B cell (primary cell): ENCODE measurements at regions of chr19 and their contacts with region 1.

Region 1: GRCh38 chr19:18460900-18461299 is 23.0 kb upstream of the ISYNA1 start:
- DNase-seq: no peak
- ATAC-seq: no peak
- H3K4me3 ChIP-seq: no peak overlapping the region
- H3K4me3 Mint-ChIP-seq: no peak overlapping the region
- H3K27ac ChIP-seq: no peak overlapping the region
- H3K27ac Mint-ChIP-seq: no peak overlapping the region
- H3K4me1 ChIP-seq: no peaks in the 10 kb centered on the region
- H3K4me1 Mint-ChIP-seq: peaks cover 2% of the 10 kb centered on the region
- H3K27me3 ChIP-seq: no peaks in the 10 kb centered on the region
- H3K27me3 Mint-ChIP-seq: no peaks in the 10 kb centered on the region
- CTCF ChIP-seq: no peak

Region 2: GRCh38 chr19:18436671-18437490 is 24.0 kb before region 1 on chr19:
- CTCF ChIA-PET with region 1: interaction called, 11 read pairs
- POLR2A ChIA-PET with region 1: no interaction called
- intact Hi-C with region 1: no loop called
- DNase-seq: peak; percentile 87
- ATAC-seq: peak; percentile 69
- H3K4me3 ChIP-seq: peak overlapping the region in 4 of 5 experiments; percentile 55 to 62 (median 60)
- H3K4me3 Mint-ChIP-seq: peak overlapping the region; percentile 84
- H3K27ac ChIP-seq: no peak overlapping the region
- H3K27ac Mint-ChIP-seq: peak overlapping the region; percentile 78
- H3K4me1 ChIP-seq: peaks cover 22 to 47% of the 10 kb centered on the region in 2 donors
- H3K4me1 Mint-ChIP-seq: peaks cover 34% of the 10 kb centered on the region
- H3K27me3 ChIP-seq: no peaks in the 10 kb centered on the region
- H3K27me3 Mint-ChIP-seq: no peaks in the 10 kb centered on the region
- CTCF ChIP-seq: peak; percentile 34

Region 3: GRCh38 chr19:18507021-18507726 is 46.3 kb after region 1 on chr19:
- CTCF ChIA-PET with region 1: no interaction called
- POLR2A ChIA-PET with region 1: no interaction called
- intact Hi-C with region 1: no loop called
- DNase-seq: no peak
- ATAC-seq: no peak
- H3K4me3 ChIP-seq: no peak overlapping the region
- H3K4me3 Mint-ChIP-seq: no peak overlapping the region
- H3K27ac ChIP-seq: no peak overlapping the region
- H3K27ac Mint-ChIP-seq: no peak overlapping the region
- H3K4me1 ChIP-seq: peaks cover 18 to 59% of the 10 kb centered on the region in 2 donors
- H3K4me1 Mint-ChIP-seq: peaks cover 71% of the 10 kb centered on the region
- H3K27me3 ChIP-seq: no peaks in the 10 kb centered on the region
- H3K27me3 Mint-ChIP-seq: no peaks in the 10 kb centered on the region
- CTCF ChIP-seq: no peak